GM10248 (cell line): ENCODE measurements at regions of chr10 and their contacts with region 1.

Region 1: DNA sequence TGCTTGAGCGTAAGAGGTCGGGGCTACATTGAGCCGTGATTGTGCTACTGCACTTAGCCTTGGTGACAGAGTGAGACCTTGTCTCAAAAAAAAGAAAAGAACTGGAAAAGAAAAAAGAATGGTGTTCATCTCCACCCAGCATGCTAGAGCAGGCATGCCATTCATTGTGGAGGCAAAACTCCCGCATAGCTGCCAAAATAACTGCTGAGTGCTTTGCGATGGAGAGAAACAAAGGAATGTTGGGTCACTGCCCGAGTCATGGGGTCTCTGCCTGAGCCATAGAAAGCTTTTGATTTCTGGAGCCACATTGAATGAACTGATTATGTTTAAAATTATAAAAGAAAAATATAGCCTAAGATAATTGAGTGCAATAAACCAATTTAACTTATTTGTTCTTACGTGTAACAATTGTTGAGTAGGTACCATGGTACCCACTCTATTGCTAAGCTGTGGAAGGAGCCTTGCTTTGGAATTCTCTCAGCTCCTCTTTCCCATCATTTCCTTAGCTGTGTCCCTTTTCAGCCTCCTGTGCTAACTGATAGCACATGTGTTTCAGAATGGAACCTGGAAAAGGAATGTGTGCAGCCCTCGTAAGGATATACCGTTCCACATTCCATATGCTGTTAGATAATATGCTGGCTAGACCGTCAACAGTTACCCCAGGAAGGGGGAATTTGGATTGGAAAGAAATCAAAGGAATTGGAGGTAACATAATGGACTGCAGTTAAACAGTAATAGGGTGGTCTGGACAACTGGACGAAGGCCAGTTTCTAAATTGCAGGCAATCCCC is 99.0 kb downstream of the KIAA1217 start:
- DNase-seq: no peak
- CTCF ChIP-seq: no peak

Region 2: GRCh38 chr10:24318517-24318916 is 10.6 kb after region 1 on chr10:
- CTCF ChIA-PET with region 1: interaction called, 21 read pairs
- POLR2A ChIA-PET with region 1: no interaction called
- DNase-seq: no peak
- CTCF ChIP-seq: no peak